ENCODE measurements at regions of chr4 and their contacts with region 1.

Region 1: DNA sequence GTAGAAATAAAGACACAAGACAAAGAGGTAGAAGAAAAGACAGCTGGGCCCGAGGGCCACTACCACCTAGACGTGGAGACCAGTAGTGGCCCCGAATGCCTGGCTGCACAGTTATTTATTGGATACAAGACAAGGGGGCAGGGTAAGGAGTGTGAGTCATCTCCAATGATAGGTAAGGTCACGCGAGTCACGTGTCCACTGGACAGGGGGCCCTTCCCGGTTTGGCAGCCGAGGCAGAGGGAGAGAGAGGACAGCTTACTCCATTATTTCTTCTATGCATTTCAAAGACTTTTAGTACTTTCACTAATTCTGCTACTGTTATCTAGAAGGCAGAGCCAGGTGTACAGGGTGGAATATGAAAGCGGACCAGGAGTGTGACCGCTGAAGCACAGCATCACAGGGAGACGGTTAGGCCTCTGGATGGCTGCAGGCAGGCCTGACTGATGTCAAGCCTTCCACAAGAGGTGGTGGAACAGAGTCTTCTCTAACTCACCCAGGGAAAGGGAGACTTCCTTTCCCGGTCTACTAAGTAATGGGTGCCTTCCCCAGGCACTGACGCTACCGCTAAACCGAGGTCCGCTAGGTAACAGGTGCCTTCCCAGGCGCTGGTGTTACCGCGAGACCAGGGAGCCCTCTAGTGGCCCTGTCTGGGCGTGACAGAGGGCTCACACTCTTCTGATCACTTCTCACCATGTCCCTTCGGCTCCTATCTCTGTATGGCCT is 44.9 kb downstream of the ZBTB49 start:
- DNase-seq: peak; percentile 50
- H3K4me3 ChIP-seq: no peak overlapping the region
- H3K27ac ChIP-seq: no peak overlapping the region
- H3K4me1 ChIP-seq: no peaks in the 10 kb centered on the region
- H3K27me3 ChIP-seq: no peaks in the 10 kb centered on the region
- CTCF ChIP-seq: peak; percentile 70 to 88

Region 2: DNA sequence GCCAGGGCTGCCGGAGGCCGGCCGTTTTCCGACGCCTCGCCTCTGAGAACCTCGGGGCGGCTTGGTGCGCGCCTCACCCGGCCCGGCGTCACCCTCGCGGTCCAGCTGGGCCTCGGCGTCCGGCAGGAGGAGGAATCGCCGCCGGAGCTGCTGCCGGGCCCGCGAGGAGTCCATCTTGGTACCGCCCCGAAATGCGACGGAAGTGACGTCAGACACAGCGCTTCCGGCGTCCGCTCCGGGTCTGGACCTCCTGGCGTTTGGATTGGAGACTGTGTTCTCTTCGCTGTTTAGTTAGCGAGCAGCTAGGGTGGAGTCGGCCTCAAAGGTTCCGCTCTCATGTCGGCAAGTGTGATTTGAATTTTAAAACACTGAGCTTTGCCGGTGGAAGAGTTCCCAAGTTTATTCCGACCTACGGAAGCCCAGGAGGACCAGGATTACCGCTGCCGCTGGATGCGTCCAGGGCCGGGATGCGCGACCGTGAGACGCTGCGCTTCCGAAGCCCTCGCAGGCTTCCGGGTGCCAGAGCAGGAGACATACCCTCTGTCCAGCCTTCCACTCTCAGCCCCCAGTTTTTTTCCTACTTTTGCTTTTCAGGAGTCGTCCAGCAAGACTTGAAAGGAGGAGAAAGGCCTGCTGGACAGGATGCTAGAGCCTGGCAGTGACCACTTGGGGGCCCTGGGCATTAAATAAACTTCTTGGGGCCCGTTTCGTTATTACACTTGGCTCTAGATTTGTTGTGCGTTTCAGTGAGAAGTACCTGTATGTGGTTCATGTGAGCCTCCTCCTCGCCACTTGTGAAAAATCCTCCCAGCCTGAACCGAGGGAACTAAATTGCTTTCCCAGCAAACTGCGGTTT is 86.7 kb before region 1 on chr4 and contains the start of gene TMEM128:
- CTCF ChIA-PET with region 1: no interaction called
- dilution Hi-C with region 1: no loop called
- in situ Hi-C with region 1: loop called in 1 of 2 experiments (anchors 5 kb)
- intact Hi-C with region 1: loop called (anchors 1 kb)
- DNase-seq: peak; percentile 92
- H3K4me3 ChIP-seq: peak within 1 kb of the TSS; percentile 75 to 97 (median 97)
- H3K27ac ChIP-seq: peak within 1 kb of the TSS; percentile 87
- H3K4me1 ChIP-seq: peaks cover 17% of the 10 kb centered on the region
- H3K27me3 ChIP-seq: no peaks in the 10 kb centered on the region
- CTCF ChIP-seq: peak in 1 of 2 donors; percentile 32
- total RNA-seq, gene TMEM128: 20.3 to 28.8 TPM

Region 3: DNA sequence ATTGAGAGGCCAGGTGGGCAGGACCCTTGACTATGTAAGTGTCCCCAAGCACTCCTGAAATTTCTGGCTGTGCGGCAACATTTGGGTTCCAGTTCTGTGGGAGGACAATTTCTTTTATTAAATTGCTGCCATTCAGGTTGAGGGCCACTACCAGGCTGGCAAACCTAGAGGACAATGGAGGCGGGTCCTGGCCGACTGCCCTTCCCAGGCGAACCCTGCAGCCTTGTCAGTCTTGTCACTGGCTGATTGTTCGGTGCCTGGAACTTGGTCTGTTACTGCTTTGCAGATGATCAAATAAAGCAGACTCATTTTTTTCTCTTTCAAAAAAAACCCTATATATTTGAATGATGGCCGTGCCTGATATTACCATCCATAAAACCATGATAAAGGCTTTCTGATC is 80.3 kb before region 1 on chr4:
- CTCF ChIA-PET with region 1: no interaction called
- dilution Hi-C with region 1: loop called (anchors 5 kb)
- in situ Hi-C with region 1: loop called (anchors 5 kb)
- intact Hi-C with region 1: loop called (anchors 1 kb)
- DNase-seq: no peak
- H3K4me3 ChIP-seq: no peak overlapping the region
- H3K27ac ChIP-seq: no peak overlapping the region
- H3K4me1 ChIP-seq: no peaks in the 10 kb centered on the region
- H3K27me3 ChIP-seq: no peaks in the 10 kb centered on the region
- CTCF ChIP-seq: no peak

Region 4: DNA sequence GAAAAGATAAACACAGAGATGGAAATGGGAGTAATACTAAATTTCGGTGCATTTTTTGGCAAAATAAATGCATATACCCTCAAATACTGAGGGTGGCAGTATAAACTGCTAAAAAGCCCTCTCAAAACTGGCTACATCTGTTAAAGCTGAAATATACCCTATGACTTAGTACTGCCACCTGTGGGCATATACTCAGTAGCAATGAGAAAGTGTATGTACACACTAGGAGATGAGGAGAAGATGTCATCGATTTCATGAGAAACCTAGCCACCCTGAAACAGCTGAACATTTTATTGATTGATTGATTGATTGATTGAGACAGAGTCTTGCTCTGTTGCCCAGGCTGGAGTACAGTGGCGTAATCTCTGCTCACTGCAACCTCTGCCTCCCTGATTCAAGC is 74.7 kb before region 1 on chr4:
- CTCF ChIA-PET with region 1: no interaction called
- dilution Hi-C with region 1: loop called (anchors 5 kb)
- in situ Hi-C with region 1: loop called in 1 of 2 experiments (anchors 5 kb)
- intact Hi-C with region 1: loop called (anchors 1 kb)
- DNase-seq: peak; percentile 50
- H3K4me3 ChIP-seq: no peak overlapping the region
- H3K27ac ChIP-seq: no peak overlapping the region
- H3K4me1 ChIP-seq: no peaks in the 10 kb centered on the region
- H3K27me3 ChIP-seq: no peaks in the 10 kb centered on the region
- CTCF ChIP-seq: peak; percentile 54 to 64

Region 5: GRCh38 chr4:4289941-4290850 is 44.8 kb before region 1 on chr4 and contains the starts of genes LYAR and ZBTB49:
- CTCF ChIA-PET with region 1: no interaction called
- dilution Hi-C with region 1: loop called (anchors 5 kb)
- in situ Hi-C with region 1: no loop called
- intact Hi-C with region 1: loop called (anchors 1 kb)
- DNase-seq: peak; percentile 93
- H3K4me3 ChIP-seq: peak within 1 kb of the TSS; percentile 61 to 98 (median 96)
- H3K27ac ChIP-seq: peak within 1 kb of the TSS; percentile 58
- H3K4me1 ChIP-seq: peaks cover 9% of the 10 kb centered on the region
- H3K27me3 ChIP-seq: no peaks in the 10 kb centered on the region
- CTCF ChIP-seq: no peak
- total RNA-seq, gene LYAR: 6.3 to 36.3 TPM
- total RNA-seq, gene ZBTB49: 4.7 to 8.6 TPM

Region 6: DNA sequence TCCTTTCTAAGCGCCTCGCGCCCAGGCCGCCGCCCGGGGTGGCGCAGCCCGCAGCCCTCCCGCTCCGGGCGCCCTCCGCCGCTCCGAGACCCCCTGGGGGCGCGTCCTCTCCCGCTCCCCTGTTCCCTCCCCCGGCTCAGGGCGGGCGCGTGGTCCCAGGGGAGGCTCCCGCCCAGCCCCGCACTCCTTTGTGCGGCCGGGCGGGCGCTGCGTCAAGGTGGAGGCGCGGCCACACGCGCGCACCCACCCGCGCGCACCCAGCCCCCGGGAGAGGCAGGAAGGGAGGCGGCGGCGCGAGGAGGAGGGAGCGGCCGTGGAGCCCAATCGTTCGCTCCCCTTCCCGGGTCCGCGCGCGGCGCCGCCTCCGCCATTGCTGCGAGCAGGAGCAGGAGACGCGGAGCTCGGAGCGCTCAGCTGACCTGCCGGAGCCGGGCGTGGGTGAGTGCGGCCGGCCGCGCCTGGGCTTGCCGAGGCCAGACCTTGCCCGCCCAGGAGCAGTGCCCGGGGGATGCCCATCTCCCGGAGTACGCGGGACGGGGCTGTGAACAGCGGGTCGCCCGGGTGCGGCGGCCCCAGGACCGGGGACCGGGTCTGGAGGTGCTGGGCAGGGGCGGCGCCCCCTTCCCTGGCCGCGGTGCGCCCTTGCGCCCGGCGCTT is 51.9 kb after region 1 on chr4 and contains the start of gene NSG1:
- CTCF ChIA-PET with region 1: no interaction called
- dilution Hi-C with region 1: no loop called
- in situ Hi-C with region 1: no loop called
- intact Hi-C with region 1: no loop called
- DNase-seq: peak; percentile 58
- H3K4me3 ChIP-seq: peak within 1 kb of the TSS; percentile 54 to 71 (median 62)
- H3K27ac ChIP-seq: no peak within 1 kb of the TSS
- H3K4me1 ChIP-seq: peaks cover 14% of the 10 kb centered on the region
- H3K27me3 ChIP-seq: peaks cover 2% of the 10 kb centered on the region
- CTCF ChIP-seq: no peak
- total RNA-seq, gene NSG1: 17.5 to 31.4 TPM

Region 7: DNA sequence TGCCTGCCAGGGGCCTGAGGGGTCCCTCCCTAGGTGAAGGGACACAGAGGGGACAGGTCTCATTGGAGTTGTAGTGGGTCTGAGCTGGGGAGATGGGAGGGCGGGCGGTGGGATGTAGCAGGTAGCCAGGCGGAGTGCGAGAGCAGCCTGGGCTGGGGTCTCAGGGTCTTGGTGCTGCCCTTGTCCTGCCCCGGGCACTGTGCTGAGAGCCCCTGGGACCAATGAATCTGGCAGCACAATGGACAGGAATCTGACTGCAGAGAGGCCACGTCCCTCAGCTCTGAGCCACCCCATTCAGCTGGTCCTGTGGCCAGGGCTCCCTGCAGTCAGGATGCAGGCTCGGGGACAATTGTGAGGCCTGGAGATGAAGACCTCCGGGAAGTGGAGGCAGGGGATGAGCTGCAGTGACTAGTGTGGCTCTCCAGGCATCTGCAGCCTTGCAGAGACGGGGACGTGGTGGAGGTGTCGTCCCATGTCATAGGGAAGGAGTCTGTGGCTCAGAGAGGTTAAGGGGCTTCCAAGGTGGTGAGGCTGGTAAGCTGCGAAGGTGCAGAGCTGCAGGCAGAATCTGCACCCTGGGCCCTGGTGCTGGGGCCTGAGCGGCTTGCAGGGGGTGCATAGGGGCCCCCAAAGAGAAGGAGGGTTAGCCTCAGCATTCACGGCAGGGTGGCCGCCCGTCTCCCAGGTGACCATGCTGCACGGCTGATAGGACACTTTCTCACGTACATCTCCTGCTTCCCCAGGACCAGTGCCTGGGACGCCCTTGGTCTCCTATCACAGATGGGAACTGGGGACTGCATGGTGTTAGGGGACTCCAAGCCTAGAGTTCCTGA is 72.6 kb after region 1 on chr4:
- CTCF ChIA-PET with region 1: interaction called, 17 read pairs
- dilution Hi-C with region 1: no loop called
- in situ Hi-C with region 1: no loop called
- intact Hi-C with region 1: no loop called
- DNase-seq: no peak
- H3K4me3 ChIP-seq: no peak overlapping the region
- H3K27ac ChIP-seq: no peak overlapping the region
- H3K4me1 ChIP-seq: peaks cover 14% of the 10 kb centered on the region
- H3K27me3 ChIP-seq: no peaks in the 10 kb centered on the region
- CTCF ChIP-seq: no peak

Measured in mammary epithelial cell (primary cell).